Naive thymus-derived CD8-positive, alpha-beta T cell (primary cell): ENCODE measurements at regions of chr1 and their contacts with region 1.

Region 1: DNA sequence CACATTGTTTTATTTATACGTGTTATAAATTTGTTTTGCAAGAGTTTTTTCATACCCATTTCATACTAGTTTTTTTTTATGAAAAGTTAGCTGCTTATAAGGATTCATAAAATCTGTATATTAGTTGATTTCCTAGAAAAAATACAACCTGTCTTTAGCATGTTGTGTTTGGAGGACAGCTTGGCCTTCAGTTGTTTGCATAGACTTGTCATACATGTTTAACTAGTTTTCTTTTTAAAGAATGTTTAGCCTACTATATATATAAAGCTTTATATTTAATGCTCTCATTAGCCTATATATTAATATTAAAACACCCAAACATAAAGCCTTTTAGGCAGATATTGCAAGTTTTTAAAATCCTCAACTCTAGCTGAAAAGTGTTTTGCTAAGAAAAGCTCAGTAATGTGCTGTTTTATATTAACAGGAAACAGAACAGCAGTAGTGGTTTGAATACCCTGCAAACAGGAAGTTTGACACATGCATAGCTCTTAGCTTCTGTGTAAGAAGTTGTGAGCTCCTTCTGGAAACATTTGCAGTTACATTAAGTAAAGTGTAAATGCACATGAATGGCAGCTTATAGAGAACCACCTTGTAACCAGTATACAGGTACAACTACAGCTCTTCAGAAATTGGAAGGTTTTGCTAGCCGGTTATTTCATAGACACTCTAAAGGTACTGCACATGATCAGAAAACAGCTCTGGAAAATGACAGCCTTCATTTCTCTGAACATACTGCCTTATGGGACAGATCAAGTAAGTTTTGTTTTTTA is at the start of gene PRKACB:
- DNase-seq: peak in 5 of 10 donors; percentile 18 to 74 (median 65)
- ATAC-seq: peak; percentile 91 to 93
- H3K4me3 Mint-ChIP-seq: peak within 1 kb of the TSS; percentile 90 to 99 (median 96)
- H3K27ac Mint-ChIP-seq: peak within 1 kb of the TSS; percentile 95 to 100 (median 97)
- H3K4me1 Mint-ChIP-seq: peaks cover 13 to 59% (median 32%) of the 10 kb centered on the region in 4 donors
- H3K27me3 Mint-ChIP-seq: no peaks in the 10 kb centered on the region
- polyA plus RNA-seq, gene PRKACB: 120 to 162 (median 131) TPM

Region 2: DNA sequence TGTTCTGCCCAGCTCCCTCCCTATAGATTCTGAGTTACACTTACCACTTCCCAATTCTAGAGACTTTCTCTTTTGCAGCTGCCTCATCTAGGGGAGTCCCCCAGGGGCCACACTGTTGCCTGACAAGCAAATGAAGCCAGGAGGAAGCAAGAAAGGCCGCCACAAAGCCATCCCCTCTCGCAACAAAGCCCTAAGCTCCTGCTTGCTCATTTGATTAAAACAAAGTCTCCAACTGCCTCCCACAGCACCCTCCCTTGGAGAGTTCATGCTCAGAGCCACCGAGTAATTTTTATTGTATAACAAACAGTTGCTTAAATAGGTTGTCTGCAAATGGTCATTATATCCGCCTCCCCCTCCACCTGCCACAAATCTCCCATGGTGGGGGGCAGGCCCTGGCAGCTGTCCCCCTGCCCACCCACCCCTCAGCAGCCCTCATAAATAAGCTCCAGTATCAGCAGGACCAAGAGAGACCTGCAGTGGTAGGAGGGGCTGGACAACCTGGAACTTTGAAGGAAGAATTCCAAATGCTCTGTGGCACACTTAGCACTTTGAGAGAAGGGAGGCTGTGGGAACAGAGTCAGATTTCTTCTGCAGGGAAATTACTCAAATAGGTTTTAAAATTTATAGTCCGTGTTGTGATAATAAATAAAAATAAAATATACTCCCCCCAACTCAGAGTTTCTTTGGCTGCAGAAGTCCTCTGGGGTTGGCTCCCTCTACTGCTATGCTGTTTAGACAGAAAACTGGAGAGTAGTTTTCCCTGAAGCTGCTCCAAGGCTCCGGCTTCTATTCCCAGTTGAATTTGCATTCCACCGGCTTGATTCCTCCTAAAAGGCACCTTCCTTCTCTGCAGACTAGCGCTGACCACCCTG is 382.6 kb before region 1 on chr1:
- POLR2A ChIA-PET with region 1: no interaction called
- DNase-seq: peak in 2 of 10 donors; percentile 5 to 10
- ATAC-seq: peak; percentile 39 to 42
- H3K4me3 Mint-ChIP-seq: no peak overlapping the region
- H3K27ac Mint-ChIP-seq: peak overlapping the region in 4 of 10 donors; percentile 28 to 46 (median 44)
- H3K4me1 Mint-ChIP-seq: peaks cover 3 to 11% (median 6%) of the 10 kb centered on the region in 4 donors
- H3K27me3 Mint-ChIP-seq: peaks cover 0 to 4% (median 2%) of the 10 kb centered on the region in 5 donors

Region 3: GRCh38 chr1:84077476-84078107 is 66.4 kb before region 1 on chr1:
- POLR2A ChIA-PET with region 1: interaction called, 10 read pairs
- DNase-seq: peak; percentile 62 to 86 (median 80)
- ATAC-seq: peak; percentile 86 to 90
- H3K4me3 Mint-ChIP-seq: peak overlapping the region; percentile 77 to 92 (median 88)
- H3K27ac Mint-ChIP-seq: peak overlapping the region; percentile 70 to 94 (median 90)
- H3K4me1 Mint-ChIP-seq: peaks cover 8 to 20% (median 13%) of the 10 kb centered on the region in 4 donors
- H3K27me3 Mint-ChIP-seq: no peaks in the 10 kb centered on the region

Region 4: DNA sequence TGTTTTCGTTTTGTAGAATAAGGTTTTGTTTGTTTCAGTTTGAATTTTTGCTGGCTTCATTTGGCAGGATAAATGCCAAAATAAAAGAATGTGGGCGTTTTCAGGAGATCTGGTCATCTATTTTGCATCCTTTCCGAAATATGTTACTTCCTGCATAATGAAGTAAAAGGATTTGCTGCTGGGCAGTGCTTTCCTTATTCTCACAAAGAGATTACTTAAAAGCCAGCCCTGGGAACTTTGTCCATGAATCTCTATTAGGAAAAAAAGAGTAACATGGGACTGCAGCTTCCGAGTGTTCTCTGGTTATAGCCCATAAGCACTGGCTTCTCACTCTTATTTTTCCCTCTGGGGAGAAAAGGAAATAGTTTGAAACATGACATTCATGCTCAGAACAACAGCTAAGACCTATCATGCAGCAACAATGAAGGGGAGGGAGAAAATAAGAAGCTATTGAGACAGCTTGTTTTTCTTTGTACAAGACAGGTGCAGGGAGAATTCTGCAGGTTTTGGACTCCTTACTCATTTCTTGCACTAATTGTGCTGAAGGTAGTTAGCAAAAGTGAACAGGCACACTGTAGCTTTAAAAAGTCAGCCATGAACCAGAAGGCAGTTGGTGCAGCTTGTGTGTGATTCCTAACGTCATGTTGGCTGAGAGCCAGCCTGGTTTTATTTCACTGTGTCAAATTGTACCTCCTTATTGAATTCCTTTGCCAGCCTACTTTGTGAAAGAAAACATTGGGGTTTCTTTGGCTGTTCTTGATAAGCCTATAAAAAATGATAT is 157.2 kb after region 1 on chr1 and contains the start of gene SAMD13:
- POLR2A ChIA-PET with region 1: interaction called, 23 read pairs
- DNase-seq: peak; percentile 32 to 84 (median 60)
- ATAC-seq: peak; percentile 51 to 53
- H3K4me3 Mint-ChIP-seq: peak within 1 kb of the TSS; percentile 68 to 92 (median 86)
- H3K27ac Mint-ChIP-seq: peak within 1 kb of the TSS in 9 of 10 donors; percentile 80 to 93 (median 88)
- H3K4me1 Mint-ChIP-seq: peaks cover 15 to 49% (median 45%) of the 10 kb centered on the region in 4 donors
- H3K27me3 Mint-ChIP-seq: peaks cover 0 to 1% (median 0%) of the 10 kb centered on the region in 5 donors
- polyA plus RNA-seq, gene SAMD13: 0.57 to 1.3 (median 1.2) TPM

Region 5: DNA sequence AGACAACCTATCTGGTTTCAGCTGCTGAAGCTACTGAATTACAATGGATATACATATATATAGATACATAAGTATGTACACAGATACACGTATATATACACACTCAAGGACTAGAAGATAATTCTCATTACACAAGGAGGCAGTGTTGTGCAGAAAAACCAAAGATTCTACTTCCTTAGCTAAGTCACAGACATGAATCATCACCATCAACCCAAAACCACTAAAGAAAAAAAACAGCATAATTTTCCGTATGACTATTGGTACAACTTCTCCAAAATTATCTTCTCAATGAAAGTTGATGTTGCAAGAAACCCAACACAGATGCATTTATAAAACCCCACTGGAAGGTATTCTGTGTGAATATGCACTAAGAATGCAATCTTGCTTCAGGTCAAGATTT is 298.3 kb after region 1 on chr1:
- POLR2A ChIA-PET with region 1: interaction called, 68 read pairs
- DNase-seq: peak in 5 of 10 donors; percentile 26 to 73 (median 66)
- ATAC-seq: peak; percentile 94 to 95
- H3K4me3 Mint-ChIP-seq: peak overlapping the region in 9 of 10 donors; percentile 1 to 62 (median 45)
- H3K27ac Mint-ChIP-seq: peak overlapping the region in 7 of 10 donors; percentile 7 to 83 (median 71)
- H3K4me1 Mint-ChIP-seq: peaks cover 0 to 19% (median 14%) of the 10 kb centered on the region in 4 donors
- H3K27me3 Mint-ChIP-seq: peaks cover 0 to 15% (median 3%) of the 10 kb centered on the region in 5 donors

Region 6: DNA sequence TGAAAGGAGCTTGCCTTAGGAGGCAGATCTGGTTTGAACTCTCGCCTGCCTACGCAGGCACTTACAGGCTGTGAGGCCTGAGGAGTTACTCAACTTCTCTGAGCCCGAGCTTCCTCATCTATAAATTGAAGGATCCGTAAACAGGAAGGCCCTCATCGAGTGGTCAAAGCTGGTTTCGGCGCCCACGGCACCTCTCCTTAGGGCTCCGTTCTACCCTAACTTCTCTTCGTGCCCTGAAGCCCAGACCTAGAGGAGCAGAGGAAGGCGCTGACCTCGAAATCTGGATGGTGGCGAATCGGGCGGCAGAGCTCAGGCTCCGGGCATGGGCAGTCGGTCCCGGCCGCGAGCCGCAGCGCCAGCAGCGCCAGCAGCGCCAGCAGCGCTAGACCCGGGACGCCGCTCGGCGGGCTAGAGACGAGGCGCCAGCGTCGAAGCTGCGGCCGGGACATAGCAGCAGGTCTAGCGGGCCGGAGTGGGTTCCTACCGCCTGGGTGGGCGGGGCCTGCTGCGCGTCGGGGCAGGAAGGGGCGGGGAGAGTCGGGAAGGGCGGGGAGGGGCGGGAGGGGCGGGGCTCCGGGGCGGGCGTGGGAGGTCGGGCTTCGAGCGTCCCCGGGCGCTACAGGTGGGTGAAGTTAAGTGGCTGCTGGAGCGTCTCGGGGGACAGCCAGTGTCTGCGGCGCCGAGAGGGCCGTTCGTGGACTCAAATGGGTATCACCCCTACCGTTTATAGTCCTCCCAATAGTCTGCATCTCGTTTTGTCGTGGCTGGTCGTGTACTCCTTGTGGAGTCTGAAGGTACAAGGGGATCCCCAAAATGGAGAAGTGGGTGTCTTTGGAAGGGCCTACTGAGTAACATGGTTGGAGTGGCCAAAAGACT is 430.2 kb after region 1 on chr1 and contains the start of gene CTBS:
- POLR2A ChIA-PET with region 1: interaction called, 11 read pairs
- DNase-seq: peak; percentile 71 to 92 (median 84)
- ATAC-seq: peak; percentile 89 to 90
- H3K4me3 Mint-ChIP-seq: peak within 1 kb of the TSS; percentile 95 to 99 (median 98)
- H3K27ac Mint-ChIP-seq: peak within 1 kb of the TSS; percentile 98 to 100 (median 100)
- H3K4me1 Mint-ChIP-seq: peaks cover 33 to 50% (median 40%) of the 10 kb centered on the region in 4 donors
- H3K27me3 Mint-ChIP-seq: no peaks in the 10 kb centered on the region
- polyA plus RNA-seq, gene CTBS: 16.3 to 21.1 (median 18.2) TPM